Activated CD8-positive, alpha-beta memory T cell treated with anti-CD3 and anti-CD28 coated beads, Interleukin-2, amount 10 ng/mL, durations not matched to agents 7 days and 5 days (primary cell): ENCODE measurements at regions of chr10 and their contacts with region 1.

Region 1: DNA sequence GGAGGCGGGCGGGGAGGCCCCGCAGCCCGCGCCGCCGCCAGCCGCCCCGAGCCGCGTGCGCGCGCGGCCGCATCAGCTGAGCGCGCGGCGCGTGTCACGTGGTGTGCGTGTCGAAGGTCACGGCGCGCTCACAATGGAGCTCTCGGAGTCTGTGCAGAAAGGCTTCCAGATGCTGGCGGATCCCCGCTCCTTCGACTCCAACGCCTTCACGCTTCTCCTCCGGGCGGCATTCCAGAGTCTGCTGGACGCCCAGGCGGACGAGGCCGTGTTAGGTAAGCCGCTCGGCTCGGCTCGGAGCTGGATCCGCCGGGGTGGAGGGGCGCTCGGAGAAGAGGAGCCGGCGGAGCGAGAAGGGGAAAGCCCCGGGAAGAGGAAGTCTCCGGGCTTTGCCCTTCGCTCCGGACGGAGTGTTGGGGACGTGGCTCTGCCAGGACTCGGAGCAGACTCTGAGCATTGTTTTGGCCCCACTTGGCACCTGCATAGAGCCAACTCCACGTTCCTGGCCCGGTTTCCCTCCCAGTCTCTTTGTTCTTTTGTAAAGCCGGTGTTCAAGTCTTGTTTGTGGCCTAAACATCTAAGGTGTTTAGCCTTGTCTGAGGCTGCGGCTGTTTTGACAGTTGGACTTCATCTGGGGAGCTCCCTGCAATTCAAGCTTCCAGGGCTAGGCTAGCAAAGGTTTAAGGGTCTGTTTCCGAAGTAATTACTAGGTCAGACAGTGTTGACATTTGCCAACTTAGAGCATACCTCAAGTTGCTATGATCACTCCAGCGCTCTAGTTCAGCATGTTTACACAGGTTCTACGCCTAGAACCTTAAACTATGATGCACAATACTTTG is at the start of gene COMMD3:
- DNase-seq: peak; percentile 87
- ATAC-seq: peak; percentile 76
- H3K4me3 Mint-ChIP-seq: peak within 1 kb of the TSS; percentile 93
- H3K27ac Mint-ChIP-seq: peak within 1 kb of the TSS; percentile 95
- H3K4me1 Mint-ChIP-seq: peaks cover 41% of the 10 kb centered on the region
- H3K27me3 Mint-ChIP-seq: peaks cover 6% of the 10 kb centered on the region
- total RNA-seq, gene COMMD3: 70.6 to 103 TPM

Region 2: GRCh38 chr10:22158426-22158825 is 158.1 kb before region 1 on chr10:
- CTCF ChIA-PET with region 1: no interaction called
- DNase-seq: no peak
- ATAC-seq: no peak
- H3K4me3 Mint-ChIP-seq: no peak overlapping the region
- H3K27ac Mint-ChIP-seq: no peak overlapping the region
- H3K4me1 Mint-ChIP-seq: peaks cover 5% of the 10 kb centered on the region
- H3K27me3 Mint-ChIP-seq: no peaks in the 10 kb centered on the region

Region 3: DNA sequence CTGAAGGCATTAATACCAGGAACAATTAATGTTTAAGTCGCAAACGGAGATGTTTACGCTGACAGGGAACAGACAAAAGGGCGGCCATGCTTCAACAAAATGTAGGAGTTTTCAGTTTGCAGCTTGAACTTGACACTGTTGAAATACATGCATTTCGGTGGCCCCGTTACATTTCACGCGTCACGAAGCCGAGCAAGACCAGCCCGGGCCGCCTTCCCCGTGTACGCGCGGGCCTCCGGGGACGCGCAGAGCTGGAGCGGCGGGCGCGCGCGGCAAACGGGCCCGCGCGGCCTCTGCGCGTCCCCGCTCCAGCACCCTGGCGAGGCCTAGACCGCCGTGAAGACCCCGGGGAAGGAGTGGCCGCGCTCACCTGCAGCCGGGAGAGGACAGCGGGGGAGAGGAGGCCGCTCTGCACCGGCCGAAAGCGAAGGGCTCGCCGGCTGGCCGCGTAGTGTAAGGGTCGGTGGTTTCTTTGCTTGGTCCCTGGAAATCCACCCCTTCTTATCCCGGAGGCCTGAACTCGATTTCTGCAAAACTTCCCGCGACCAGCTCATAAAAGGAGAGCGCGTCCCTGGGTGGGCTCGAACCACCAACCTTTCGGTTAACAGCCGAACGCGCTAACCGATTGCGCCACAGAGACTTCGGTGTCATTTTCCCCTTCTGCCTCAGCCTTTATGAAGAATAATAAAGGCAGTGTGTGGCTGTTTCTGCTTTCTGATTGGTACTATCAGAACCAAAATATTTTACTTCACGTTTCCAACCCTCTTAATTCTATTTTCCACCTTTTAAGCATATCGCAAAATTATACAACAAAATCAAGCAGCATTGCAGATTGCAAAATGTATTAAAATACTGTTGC is 87.3 kb before region 1 on chr10:
- CTCF ChIA-PET with region 1: interaction called, 12 read pairs
- DNase-seq: peak; percentile 89
- ATAC-seq: peak; percentile 82
- H3K4me3 Mint-ChIP-seq: peak overlapping the region; percentile 79
- H3K27ac Mint-ChIP-seq: peak overlapping the region; percentile 92
- H3K4me1 Mint-ChIP-seq: peaks cover 20% of the 10 kb centered on the region
- H3K27me3 Mint-ChIP-seq: peaks cover 28% of the 10 kb centered on the region

Region 4: DNA sequence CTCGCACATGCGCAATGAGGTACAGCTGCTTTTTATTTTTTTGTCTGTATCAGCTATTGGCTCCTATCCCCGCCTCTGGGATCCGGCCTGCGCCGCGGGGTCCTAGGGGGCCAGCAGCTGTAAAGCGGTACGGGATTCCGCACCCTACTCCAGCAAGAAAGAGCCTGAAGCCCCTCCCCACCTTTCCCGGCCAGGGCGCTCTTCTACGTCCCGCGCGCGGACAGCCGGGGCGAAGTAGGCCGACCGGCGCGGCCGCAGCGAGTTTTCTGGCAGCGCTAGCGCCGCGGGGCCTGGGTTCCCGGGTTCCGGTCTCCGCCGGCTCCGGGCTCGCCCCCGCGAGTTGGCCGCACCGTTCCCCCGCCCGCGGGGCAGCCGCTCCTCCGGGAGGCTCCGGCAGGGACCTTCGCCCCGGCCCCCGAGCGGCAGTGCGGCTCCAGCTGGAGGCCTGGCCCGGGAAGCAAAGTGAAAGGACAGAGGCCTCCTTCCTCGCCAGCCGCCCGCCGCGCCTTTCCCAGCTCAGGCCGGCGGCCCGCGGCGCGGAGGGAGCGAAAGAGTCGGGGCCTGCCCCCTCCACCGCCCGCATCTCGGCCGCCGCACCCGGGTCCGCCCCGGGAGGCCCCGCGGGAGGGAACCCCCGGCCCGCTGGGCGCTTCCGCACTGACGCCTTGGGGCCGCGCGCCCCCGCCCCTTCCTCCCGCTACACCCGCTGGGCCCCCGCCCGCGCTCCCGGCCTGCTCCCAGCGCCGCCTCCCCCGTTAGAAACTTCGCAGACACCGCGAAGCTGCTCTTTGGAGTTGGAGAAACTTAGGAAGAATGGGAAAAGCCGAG is 24.1 kb after region 1 on chr10:
- CTCF ChIA-PET with region 1: interaction called, 13 read pairs
- DNase-seq: peak; percentile 80
- ATAC-seq: peak; percentile 60
- H3K4me3 Mint-ChIP-seq: peak overlapping the region; percentile 77
- H3K27ac Mint-ChIP-seq: peak overlapping the region; percentile 94
- H3K4me1 Mint-ChIP-seq: peaks cover 42% of the 10 kb centered on the region
- H3K27me3 Mint-ChIP-seq: peaks cover 75% of the 10 kb centered on the region